ENCODE measurements at regions of chr7 and their contacts with region 1.

Region 1: GRCh38 chr7:134593530-134594392 is 44.9 kb downstream of the AKR1B15 start:
- DNase-seq: peak; percentile 81
- ATAC-seq: peak; percentile 92

Region 2: DNA sequence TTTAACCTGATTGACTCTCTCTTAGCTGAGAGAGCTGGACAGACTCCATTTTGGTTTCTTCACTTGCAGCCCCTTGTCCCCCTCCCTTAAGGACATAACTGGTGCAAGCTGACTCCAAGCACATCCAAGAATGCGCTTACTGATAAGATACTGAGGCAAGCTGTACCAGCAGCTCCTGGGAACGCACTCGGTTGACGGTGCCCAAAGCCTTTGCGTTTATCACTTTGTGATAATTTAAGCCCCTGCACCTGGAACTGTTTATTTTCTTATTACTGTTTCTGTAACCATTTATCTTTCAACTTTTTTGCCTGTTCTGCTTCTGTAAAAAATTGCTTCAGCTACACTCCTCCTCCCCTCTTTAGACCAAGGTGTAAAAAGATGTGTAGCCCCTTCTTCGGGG is 36.4 kb before region 1 on chr7:
- intact Hi-C with region 1: loop called (anchors 5 kb)
- DNase-seq: no peak
- ATAC-seq: no peak